ENCODE measurements at regions of chr10 and their contacts with region 1.

Region 1: DNA sequence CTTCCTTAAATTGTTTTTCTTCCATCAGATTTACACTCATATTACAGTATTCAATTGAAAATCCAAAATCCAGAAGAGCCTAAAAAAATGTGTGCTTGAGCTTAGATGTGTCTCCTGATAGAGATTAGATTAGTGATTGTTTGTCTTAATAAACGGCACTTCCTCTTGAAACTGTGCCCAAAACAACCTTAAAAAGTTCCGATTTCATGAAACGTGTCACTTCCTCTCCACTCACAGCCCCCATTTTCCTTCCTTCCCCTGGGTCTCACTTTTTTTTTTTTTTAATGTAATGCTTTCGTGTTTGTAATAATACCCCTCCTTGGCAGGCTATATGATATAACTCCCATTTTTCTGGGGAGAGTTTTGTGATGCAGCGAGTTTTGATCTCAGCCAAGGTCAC is 114.8 kb upstream of the ADO start:
- DNase-seq: peak in 4 of 5 donors; percentile 35 to 54 (median 49)
- H3K4me3 ChIP-seq: peak overlapping the region in 1 of 2 donors; percentile 15
- H3K4me3 Mint-ChIP-seq: peak overlapping the region; percentile 68 to 88 (median 80)
- H3K27ac ChIP-seq: peak overlapping the region; percentile 55
- H3K27ac Mint-ChIP-seq: peak overlapping the region; percentile 75 to 95 (median 90)
- H3K4me1 ChIP-seq: peaks cover 43% of the 10 kb centered on the region
- H3K4me1 Mint-ChIP-seq: peaks cover 35 to 65% (median 52%) of the 10 kb centered on the region in 4 donors
- H3K27me3 ChIP-seq: no peaks in the 10 kb centered on the region
- H3K27me3 Mint-ChIP-seq: no peaks in the 10 kb centered on the region

Region 2: DNA sequence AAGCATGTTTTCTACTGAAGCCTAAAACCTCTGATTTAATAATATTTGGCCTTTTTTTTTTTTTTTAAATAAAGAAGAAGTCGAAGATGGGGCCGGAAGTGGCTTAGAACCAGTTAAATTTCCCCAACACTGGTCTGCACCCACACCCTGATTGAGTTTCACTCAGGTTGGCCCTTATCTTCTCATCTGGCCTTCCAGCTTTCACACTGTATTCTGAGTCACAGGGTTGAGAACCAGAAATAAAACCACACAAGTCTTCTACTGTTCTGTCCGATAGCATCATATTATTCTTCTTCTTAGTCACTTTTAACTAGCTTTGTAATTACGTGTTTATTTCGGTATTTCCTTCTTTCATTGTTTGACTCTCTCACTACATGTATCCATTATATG is 305.7 kb before region 1 on chr10:
- CTCF ChIA-PET with region 1: no interaction called
- POLR2A ChIA-PET with region 1: no interaction called
- intact Hi-C with region 1: no loop called
- DNase-seq: peak; percentile 70 to 90 (median 72)
- H3K4me3 ChIP-seq: peak overlapping the region in 1 of 2 donors; percentile 20
- H3K4me3 Mint-ChIP-seq: peak overlapping the region; percentile 41 to 69 (median 62)
- H3K27ac ChIP-seq: peak overlapping the region; percentile 52
- H3K27ac Mint-ChIP-seq: peak overlapping the region; percentile 70 to 88 (median 81)
- H3K4me1 ChIP-seq: peaks cover 48% of the 10 kb centered on the region
- H3K4me1 Mint-ChIP-seq: peaks cover 42 to 87% (median 57%) of the 10 kb centered on the region in 4 donors
- H3K27me3 ChIP-seq: no peaks in the 10 kb centered on the region
- H3K27me3 Mint-ChIP-seq: no peaks in the 10 kb centered on the region

Region 3: DNA sequence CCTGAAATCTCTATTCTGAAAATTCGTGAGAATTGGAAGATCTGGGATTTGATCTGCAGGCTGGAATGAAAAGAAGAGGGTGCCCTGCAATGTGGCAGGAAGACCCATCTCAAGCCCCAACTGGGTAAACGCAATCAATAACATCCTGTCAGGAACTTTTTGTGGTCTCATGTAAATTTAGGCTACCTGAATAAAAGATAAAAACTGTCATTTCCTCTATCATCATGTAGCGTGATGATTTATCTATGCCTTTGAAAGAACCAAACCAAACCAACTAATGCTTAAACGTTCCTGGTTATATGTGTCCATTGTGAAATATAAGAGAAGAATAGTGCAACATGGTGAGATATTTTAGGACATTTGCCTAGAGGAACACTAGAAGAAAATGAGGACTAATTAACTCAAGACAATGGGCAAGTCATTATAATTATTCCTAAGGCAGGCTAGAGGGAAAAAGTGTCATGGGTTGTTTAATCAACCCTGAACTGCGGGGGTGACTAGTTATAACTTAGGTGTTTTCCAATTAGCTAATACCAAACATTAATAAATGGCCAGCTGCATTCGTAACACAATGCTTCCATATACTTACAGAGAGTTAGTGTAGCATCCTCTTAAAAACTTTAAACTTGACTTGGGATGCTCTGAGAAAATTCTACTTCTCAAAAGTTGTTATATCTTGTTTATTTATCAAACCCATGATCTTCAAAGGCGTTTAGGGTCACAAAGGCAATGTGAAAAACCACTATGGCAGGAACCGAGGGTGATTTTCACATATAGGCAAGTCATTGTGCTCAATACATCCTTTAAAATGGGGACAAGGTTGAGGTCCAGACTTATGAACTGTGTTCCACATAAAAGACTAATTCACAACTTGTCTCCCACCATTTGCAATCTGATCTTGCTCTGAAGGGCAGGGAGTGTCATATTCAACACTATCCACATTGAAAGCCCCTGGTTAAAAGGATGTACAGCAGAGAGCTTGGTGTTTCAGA is 66.2 kb after region 1 on chr10:
- CTCF ChIA-PET with region 1: no interaction called
- POLR2A ChIA-PET with region 1: interaction called, 3 read pairs
- intact Hi-C with region 1: loop called (anchors 2 kb)
- DNase-seq: peak in 4 of 5 donors; percentile 27 to 44 (median 36)
- H3K4me3 ChIP-seq: no peak overlapping the region
- H3K4me3 Mint-ChIP-seq: peak overlapping the region; percentile 6 to 72 (median 52)
- H3K27ac ChIP-seq: no peak overlapping the region
- H3K27ac Mint-ChIP-seq: peak overlapping the region; percentile 10 to 88 (median 42)
- H3K4me1 ChIP-seq: peaks cover 22% of the 10 kb centered on the region
- H3K4me1 Mint-ChIP-seq: peaks cover 20 to 35% (median 23%) of the 10 kb centered on the region in 4 donors
- H3K27me3 ChIP-seq: no peaks in the 10 kb centered on the region
- H3K27me3 Mint-ChIP-seq: no peaks in the 10 kb centered on the region

Region 4: GRCh38 chr10:62870866-62871265 is 181.2 kb after region 1 on chr10:
- CTCF ChIA-PET with region 1: no interaction called
- POLR2A ChIA-PET with region 1: no interaction called
- intact Hi-C with region 1: no loop called
- DNase-seq: no peak
- H3K4me3 ChIP-seq: no peak overlapping the region
- H3K4me3 Mint-ChIP-seq: no peak overlapping the region
- H3K27ac ChIP-seq: no peak overlapping the region
- H3K27ac Mint-ChIP-seq: no peak overlapping the region
- H3K4me1 ChIP-seq: no peaks in the 10 kb centered on the region
- H3K4me1 Mint-ChIP-seq: no peaks in the 10 kb centered on the region
- H3K27me3 ChIP-seq: no peaks in the 10 kb centered on the region
- H3K27me3 Mint-ChIP-seq: peaks cover 5% of the 10 kb centered on the region in 2 donors

Region 5: DNA sequence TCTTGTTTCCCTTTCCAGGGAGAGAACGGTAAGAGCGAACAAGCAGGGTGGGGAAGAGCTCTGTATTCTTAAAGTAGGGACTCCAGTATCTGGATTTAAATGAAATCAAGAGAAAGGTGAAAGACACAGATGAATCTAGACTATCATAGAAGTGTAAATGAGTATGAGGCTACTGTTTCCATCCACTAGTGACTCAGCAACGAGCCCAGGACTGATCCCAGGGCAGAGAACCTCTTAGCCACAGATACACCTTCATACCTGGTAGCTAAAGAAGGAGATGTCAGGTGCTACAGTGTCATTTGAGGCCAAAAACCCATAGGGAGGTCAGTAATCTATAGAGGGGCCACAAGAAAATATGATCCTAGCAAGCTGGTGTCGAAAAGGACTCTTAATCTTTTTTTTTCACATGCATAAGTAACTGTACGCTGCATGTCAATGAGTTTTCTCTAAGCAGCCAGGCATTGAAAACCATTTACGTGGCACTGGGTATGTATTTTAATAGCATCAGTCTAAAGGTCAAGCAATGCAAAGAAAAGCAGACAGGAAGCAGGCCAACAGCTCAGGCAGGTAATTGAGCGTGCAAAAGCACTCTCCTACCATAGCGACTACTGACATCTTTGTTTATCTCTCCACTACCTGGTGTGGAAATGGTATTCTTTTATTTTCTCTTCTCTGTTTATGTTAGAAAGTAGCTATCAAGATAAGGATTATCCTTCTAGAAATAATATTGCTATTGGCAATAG is 217.9 kb after region 1 on chr10:
- CTCF ChIA-PET with region 1: no interaction called
- POLR2A ChIA-PET with region 1: no interaction called
- intact Hi-C with region 1: no loop called
- DNase-seq: no peak
- H3K4me3 ChIP-seq: no peak overlapping the region
- H3K4me3 Mint-ChIP-seq: no peak overlapping the region
- H3K27ac ChIP-seq: no peak overlapping the region
- H3K27ac Mint-ChIP-seq: no peak overlapping the region
- H3K4me1 ChIP-seq: no peaks in the 10 kb centered on the region
- H3K4me1 Mint-ChIP-seq: no peaks in the 10 kb centered on the region
- H3K27me3 ChIP-seq: no peaks in the 10 kb centered on the region
- H3K27me3 Mint-ChIP-seq: peaks cover 2 to 5% of the 10 kb centered on the region in 2 donors

Measured in CD4-positive, alpha-beta memory T cell (primary cell).